Activated B cell treated with CpG ODN at 0.5 μM for 24 hours (primary cell): ENCODE measurements at regions of chr11 and their contacts with region 1.

Region 1: DNA sequence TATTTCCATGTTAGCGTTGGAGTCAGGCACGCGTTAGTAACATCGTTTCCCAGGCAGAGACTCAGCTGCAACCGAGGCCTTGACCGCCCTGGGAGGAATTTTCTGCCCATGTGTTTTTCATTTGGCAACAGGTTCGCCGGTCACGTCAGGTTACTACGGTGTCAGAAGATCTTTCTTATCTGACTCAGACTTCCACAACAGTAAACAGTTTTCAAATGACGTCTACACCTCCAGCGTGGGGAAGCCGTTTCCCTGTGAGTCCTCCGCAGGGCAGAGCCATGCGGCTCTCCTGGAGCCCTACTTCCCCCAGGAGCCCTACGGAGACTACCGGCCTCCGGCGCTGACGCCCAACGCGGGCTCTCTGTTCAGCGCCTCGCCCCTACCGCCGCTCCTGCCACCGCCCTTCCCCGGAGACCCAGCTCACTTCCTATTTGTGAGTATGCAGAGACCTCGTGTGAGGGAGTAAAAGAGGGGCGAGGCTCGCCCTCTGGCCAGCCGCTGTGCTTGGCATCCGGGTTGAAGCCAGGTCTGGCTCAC is 14.3 kb upstream of the POU2AF3 start:
- DNase-seq: no peak
- ATAC-seq: peak; percentile 67
- H3K4me3 Mint-ChIP-seq: peak overlapping the region; percentile 58
- H3K27ac Mint-ChIP-seq: no peak overlapping the region
- H3K4me1 Mint-ChIP-seq: peaks cover 13% of the 10 kb centered on the region
- H3K27me3 Mint-ChIP-seq: no peaks in the 10 kb centered on the region
- CTCF ChIP-seq: no peak

Region 2: GRCh38 chr11:110447897-110448745 is 835.9 kb before region 1 on chr11:
- CTCF ChIA-PET with region 1: interaction called, 4 read pairs
- POLR2A ChIA-PET with region 1: no interaction called
- intact Hi-C with region 1: loop called (anchors 1 kb)
- DNase-seq: no peak
- ATAC-seq: no peak
- H3K4me3 Mint-ChIP-seq: no peak overlapping the region
- H3K27ac Mint-ChIP-seq: no peak overlapping the region
- H3K4me1 Mint-ChIP-seq: peaks cover 7% of the 10 kb centered on the region
- H3K27me3 Mint-ChIP-seq: no peaks in the 10 kb centered on the region
- CTCF ChIP-seq: no peak

Region 3: DNA sequence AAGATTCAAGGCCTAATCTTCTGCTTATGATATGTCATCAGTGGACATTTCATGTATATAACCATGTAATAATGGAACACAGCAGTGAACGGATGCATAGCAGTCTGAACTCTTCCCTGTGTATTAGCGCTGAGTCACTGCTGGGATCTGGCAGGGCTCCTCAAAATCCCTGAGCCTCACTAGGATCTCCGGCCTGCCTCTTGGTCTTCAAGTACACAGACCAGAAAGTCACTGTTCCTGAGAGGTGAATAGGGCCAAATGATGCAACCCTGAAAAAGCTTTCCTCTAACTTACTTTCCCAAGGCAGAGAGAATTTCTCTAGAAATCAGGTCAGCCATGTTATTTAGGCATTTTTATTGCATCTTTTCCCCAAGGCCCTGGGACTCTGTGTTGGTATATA is 60.0 kb after region 1 on chr11:
- CTCF ChIA-PET with region 1: interaction called, 5 read pairs
- POLR2A ChIA-PET with region 1: no interaction called
- intact Hi-C with region 1: loop called (anchors 5 kb)
- DNase-seq: no peak
- ATAC-seq: no peak
- H3K4me3 Mint-ChIP-seq: no peak overlapping the region
- H3K27ac Mint-ChIP-seq: no peak overlapping the region
- H3K4me1 Mint-ChIP-seq: peaks cover 32% of the 10 kb centered on the region
- H3K27me3 Mint-ChIP-seq: no peaks in the 10 kb centered on the region
- CTCF ChIP-seq: no peak

Region 4: GRCh38 chr11:111378861-111379601 is 95.0 kb after region 1 on chr11 and contains the start of gene POU2AF1:
- CTCF ChIA-PET with region 1: interaction called, 9 read pairs
- POLR2A ChIA-PET with region 1: interaction called, 4 read pairs
- intact Hi-C with region 1: loop called (anchors 1 kb)
- DNase-seq: peak; percentile 76
- ATAC-seq: peak; percentile 69
- H3K4me3 Mint-ChIP-seq: peak within 1 kb of the TSS; percentile 96
- H3K27ac Mint-ChIP-seq: peak within 1 kb of the TSS; percentile 98
- H3K4me1 Mint-ChIP-seq: peaks cover 88% of the 10 kb centered on the region
- H3K27me3 Mint-ChIP-seq: no peaks in the 10 kb centered on the region
- CTCF ChIP-seq: no peak
- total RNA-seq, gene POU2AF1: 141 and 155 TPM in 2 replicates

Region 5: DNA sequence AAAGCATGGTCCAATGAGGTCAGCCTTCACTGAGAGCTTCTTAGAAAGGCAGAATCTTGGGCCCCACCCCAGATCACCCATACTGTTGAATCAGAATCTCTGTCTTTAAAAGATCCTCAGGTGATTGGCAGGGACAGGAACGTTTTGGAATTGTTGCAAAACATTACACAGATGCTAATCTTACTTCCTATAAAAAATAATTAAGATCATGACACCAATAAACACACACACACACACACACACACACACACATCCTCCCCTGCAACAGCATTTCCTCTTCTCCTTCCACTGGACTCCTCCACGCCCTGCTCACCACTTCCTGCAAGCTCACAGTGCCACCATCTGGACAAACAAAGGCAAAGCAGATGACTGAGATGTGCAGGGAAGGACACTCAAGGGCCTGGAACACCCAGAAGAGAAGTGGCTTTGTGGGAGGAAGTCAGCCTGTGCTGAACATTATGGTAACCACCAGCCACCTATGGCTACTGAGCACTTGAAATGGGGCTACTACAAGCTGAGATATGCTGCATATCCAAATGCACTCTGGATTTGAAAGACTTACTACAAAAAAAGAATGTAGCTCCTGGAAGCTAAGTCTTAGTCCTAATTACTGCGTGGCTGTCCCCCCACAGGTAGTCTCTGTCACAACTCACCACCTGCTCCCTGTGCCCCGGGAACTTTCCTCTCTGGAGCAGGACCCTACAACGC is 162.5 kb after region 1 on chr11:
- CTCF ChIA-PET with region 1: interaction called, 49 read pairs
- POLR2A ChIA-PET with region 1: no interaction called
- intact Hi-C with region 1: loop called (anchors 1 kb)
- DNase-seq: peak; percentile 55
- ATAC-seq: peak; percentile 95
- H3K4me3 Mint-ChIP-seq: no peak overlapping the region
- H3K27ac Mint-ChIP-seq: peak overlapping the region; percentile 43
- H3K4me1 Mint-ChIP-seq: peaks cover 36% of the 10 kb centered on the region
- H3K27me3 Mint-ChIP-seq: peaks cover 2% of the 10 kb centered on the region
- CTCF ChIP-seq: no peak

Region 6: GRCh38 chr11:111759376-111759775 is 475.4 kb after region 1 on chr11:
- CTCF ChIA-PET with region 1: no interaction called
- POLR2A ChIA-PET with region 1: no interaction called
- intact Hi-C with region 1: no loop called
- DNase-seq: no peak
- ATAC-seq: no peak
- H3K4me3 Mint-ChIP-seq: no peak overlapping the region
- H3K27ac Mint-ChIP-seq: no peak overlapping the region
- H3K4me1 Mint-ChIP-seq: peaks cover 6% of the 10 kb centered on the region
- H3K27me3 Mint-ChIP-seq: no peaks in the 10 kb centered on the region
- CTCF ChIP-seq: no peak

Region 7: DNA sequence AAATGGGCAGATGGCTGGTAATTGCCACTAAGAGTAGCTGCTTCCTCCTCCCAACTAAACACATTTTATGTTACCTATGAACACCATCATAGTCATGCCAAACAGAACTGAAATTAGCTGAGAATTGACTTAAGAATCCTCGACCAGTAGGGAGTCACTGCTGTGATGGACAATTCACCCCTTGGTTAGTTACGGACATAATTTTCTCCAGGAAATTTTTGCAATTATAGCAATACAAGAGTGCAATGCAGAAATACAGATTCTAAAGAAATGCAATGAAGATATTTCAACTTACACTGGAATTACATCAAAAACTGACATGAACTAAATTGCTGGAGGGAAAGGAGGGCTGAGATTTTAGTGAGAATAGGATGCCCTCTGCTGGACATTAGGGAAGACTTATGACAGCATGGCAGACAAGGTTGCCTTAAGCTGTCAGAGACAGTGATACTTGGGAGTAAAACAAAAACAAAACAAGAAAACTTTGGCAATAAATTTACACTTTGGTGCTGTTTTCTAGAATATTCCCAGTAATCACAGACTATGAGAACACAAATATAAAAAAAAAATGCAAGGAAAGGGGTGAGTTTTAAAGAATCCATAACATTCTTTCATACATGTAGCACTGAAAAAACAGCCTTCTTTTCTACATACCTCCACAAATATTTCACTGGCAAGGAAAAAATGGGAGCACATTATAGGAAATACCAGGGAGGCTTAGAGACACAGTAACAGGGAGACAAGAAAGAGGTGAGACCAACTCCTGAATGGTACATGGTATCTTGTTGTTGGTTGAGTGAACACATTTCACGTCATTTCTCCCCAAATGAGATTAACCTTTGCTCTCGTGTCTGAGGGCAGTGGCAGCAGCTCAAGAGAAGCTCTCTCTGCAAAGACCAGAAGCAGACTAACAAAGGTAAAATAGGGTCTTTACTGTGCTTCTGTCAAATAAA is 493.4 kb after region 1 on chr11:
- CTCF ChIA-PET with region 1: no interaction called
- POLR2A ChIA-PET with region 1: no interaction called
- intact Hi-C with region 1: loop called (anchors 5 kb)
- DNase-seq: no peak
- ATAC-seq: peak; percentile 72
- H3K4me3 Mint-ChIP-seq: peak overlapping the region; percentile 35
- H3K27ac Mint-ChIP-seq: peak overlapping the region; percentile 72
- H3K4me1 Mint-ChIP-seq: peaks cover 23% of the 10 kb centered on the region
- H3K27me3 Mint-ChIP-seq: no peaks in the 10 kb centered on the region
- CTCF ChIP-seq: no peak